GM18951 (cell line): ENCODE measurements at regions of chr1 and their contacts with region 1.

Region 1: GRCh38 chr1:24941564-24941963 is 11.5 kb upstream of the RUNX3 start:
- POLR2A ChIP-seq: no peak

Region 2: DNA sequence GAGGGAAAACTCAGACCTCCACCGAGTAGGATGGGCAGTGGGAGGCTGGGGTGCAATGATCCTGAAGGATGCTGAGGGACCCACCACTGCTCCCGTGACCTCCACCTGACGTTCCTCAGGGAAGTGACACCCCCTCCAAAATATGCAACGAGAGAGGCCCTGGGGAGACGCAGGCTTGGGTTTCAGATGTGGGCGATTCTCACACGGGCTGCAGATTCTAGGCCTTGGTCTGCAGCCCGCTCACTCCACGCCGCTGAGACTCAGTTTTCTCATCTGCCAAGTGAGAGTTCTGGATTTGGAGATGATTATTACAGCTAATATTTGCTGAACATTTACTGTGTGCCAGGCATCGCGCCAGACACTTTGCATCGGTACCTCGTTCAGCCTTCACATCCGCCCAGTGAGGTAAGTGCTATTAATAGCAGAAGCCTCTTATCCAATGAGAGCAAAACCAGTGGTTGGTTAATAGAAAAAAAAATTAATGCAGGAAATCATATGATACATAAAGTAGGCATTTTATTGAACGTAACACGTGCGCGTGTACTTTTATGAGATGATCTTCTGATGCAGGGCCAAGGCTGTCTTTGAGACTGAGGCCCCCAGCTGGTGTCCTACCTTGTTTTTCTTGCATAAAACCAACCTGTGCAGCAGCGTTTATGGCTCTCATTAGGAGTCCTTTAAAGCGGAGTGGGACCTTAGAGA is 90.6 kb after region 1 on chr1:
- in situ Hi-C with region 1: loop called (anchors 5 kb)
- POLR2A ChIP-seq: peak; percentile 47